Posterior cingulate gyrus (tissue), 11 donors: ENCODE measurements at regions of chr7 and their contacts with region 1.

Region 1: DNA sequence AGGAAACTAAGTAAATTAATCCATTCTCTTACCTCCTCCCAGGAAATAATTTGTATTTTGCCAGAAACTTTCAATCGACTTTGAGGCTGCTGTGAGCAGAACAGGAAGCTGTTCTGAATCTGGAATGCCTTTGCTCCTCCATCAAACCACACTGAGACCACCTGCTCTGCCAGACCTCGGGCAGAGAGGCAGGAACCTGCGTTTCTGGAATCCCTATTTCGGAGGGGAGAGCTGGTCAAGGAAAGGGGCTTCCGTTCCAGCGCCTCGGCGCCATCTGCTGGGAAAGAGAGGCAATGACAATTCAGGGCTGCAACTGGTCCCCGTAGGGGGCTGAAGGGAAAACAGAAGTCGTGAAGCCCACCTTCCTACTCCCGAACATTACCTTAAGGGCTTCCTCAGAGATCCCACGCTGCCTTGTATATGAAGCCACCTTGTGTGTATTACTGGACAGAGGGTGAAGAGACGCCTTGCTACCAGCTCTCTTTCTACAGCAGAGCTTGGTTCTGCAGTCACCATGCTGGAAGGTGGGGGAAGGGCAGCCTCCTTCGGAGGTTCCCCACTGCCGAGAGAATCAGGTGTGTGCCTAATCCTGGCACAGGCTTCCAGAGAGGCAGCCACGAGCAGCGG is 31.2 kb downstream of the ZNF467 start:
- DNase-seq: peak; percentile 69 to 97 (median 84)

Region 2: DNA sequence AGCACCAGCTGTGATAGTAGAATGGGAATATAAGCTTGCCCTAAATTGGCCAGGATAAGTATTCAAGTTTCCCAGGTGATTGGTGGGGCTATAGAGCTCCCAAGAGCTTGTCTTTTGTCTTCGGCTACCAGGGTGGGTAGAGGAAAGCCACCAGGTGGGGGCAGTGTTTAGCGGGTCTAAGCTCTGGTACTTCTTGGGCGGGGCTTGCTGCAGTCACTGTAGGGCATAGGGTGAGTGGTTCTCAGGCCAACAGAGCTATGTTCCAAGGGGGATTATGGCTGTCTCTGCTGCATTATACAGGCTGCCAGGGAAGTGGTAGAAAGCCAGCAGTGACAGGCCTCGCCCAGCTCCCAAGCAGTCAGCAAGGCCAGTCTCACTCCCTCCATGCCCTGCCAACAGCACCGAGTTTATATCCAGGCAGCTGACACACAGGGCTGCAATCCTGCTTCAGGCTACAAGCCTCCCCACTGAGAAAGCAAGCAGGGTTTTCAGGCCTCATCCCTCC is 79.5 kb before region 1 on chr7:
- intact Hi-C with region 1: loop called (anchors 1 kb)
- DNase-seq: peak in 6 of 10 donors; percentile 40 to 93 (median 66)